ENCODE measurements at regions of chr3 and their contacts with region 1.

Region 1: DNA sequence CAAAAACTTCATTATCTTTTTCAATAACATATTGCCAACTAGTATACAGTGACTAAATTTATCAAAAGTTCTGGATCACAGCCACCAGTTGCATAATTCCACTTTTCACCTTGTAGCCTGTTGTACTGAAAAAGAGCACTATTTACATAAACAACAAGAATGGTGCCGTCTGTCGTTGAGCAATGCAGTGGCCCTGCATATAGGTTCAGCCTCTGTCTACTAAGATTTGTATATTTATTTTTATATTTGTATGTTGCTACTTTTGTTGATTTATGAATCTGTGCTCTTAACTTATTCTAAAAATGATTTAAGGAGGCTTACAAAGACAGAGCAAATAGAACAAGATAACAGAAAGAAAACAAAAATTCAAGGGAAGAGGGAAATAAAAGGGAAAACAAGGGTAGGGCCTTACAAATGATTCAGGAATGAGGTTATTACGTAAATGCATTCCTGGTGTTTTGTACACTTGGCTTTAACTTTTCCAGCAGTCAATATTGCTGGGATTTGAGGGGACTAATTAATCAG is 257.6 kb upstream of the STT3B start:
- DNase-seq: peak; percentile 21
- H3K4me3 Mint-ChIP-seq: no peak overlapping the region
- H3K27ac Mint-ChIP-seq: peak overlapping the region; percentile 63
- H3K4me1 Mint-ChIP-seq: peaks cover 47% of the 10 kb centered on the region
- H3K27me3 Mint-ChIP-seq: no peaks in the 10 kb centered on the region
- CTCF ChIP-seq: no peak

Region 2: DNA sequence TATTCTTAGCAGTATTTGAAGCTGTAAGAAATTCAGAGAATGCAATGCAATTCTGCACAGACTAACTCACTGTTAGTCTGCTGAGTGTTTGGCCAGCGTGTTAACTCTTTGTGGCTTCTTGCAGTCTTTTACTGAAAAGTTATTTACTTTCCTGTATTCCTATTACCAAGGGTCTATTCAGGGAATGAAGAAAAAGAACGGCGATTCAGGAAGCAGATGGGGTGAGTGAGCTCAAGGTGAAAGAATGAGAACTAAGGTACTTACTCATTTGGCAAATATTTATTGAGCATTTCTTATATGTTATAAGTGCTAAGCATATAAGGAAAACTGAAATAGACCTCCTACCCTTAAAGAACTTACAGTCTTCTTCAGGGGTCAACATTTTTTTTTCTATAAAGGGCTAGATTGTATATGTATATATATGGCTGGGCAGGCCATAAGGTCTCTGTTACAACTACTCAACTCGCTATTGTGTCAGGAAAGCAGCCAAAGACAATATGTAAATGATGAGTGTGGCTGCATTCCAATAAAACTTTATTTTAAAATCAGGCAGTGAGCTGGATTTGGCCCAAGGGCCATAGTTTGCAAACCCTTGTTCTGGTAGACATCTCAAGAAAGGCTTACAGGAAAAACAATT is 108.7 kb before region 1 on chr3:
- CTCF ChIA-PET with region 1: no interaction called
- intact Hi-C with region 1: loop called (anchors 10 kb)
- DNase-seq: peak; percentile 22
- H3K4me3 Mint-ChIP-seq: no peak overlapping the region
- H3K27ac Mint-ChIP-seq: no peak overlapping the region
- H3K4me1 Mint-ChIP-seq: peaks cover 25% of the 10 kb centered on the region
- H3K27me3 Mint-ChIP-seq: no peaks in the 10 kb centered on the region
- CTCF ChIP-seq: no peak

Region 3: DNA sequence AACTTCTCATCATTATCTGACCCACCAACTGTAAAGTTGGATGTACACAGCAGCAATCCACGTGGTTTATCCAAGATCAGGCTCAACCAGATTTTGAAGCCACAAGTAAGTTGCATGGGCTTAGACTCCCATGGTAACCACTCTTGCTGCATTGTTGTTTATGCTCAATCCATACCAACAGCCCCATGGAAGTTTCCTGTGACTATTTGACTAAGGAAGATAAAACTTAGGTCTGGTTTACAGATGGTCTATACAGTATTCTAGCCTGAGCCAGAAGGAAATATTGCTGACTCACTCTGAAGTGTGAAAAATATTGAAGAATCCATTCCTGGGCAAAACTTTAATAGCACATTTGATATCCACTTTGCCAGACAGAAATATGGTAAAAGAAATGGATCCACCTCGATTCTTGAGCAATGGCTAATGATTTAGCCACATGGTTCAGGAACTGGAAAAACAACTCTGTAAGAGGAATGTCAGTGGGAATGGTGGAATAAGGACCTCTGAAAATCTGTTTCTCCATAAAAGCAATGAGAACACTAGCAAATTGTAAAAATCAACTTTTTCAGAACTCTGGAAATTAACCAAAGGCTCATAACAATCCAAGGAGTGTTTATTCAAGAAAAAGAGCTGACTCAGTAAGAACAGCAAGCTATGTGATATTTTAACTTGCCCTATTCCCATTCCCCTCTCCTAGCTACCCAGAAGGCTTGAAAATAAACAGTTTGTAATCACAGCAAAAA is 94.7 kb after region 1 on chr3:
- CTCF ChIA-PET with region 1: no interaction called
- intact Hi-C with region 1: loop called (anchors 5 kb)
- DNase-seq: no peak
- H3K4me3 Mint-ChIP-seq: no peak overlapping the region
- H3K27ac Mint-ChIP-seq: no peak overlapping the region
- H3K4me1 Mint-ChIP-seq: no peaks in the 10 kb centered on the region
- H3K27me3 Mint-ChIP-seq: no peaks in the 10 kb centered on the region
- CTCF ChIP-seq: no peak